Caco-2 (cell line): ENCODE measurements at regions of chr12 and their contacts with region 1.

Region 1: GRCh38 chr12:13044002-13044905 is at the start of gene FAM234B:
- DNase-seq: peak; percentile 82 to 89
- H3K4me3 ChIP-seq: peak within 1 kb of the TSS; percentile 96
- H3K4me3 Mint-ChIP-seq: peak within 1 kb of the TSS; percentile 77
- H3K27ac Mint-ChIP-seq: no peak within 1 kb of the TSS
- H3K4me1 ChIP-seq: peaks cover 13% of the 10 kb centered on the region
- H3K4me1 Mint-ChIP-seq: peaks cover 4% of the 10 kb centered on the region
- H3K27me3 ChIP-seq: no peaks in the 10 kb centered on the region
- H3K27me3 Mint-ChIP-seq: no peaks in the 10 kb centered on the region
- CTCF ChIP-seq: peak; percentile 55 to 62
- total RNA-seq, gene FAM234B: 11.2 and 11.4 TPM in 2 replicates

Region 2: DNA sequence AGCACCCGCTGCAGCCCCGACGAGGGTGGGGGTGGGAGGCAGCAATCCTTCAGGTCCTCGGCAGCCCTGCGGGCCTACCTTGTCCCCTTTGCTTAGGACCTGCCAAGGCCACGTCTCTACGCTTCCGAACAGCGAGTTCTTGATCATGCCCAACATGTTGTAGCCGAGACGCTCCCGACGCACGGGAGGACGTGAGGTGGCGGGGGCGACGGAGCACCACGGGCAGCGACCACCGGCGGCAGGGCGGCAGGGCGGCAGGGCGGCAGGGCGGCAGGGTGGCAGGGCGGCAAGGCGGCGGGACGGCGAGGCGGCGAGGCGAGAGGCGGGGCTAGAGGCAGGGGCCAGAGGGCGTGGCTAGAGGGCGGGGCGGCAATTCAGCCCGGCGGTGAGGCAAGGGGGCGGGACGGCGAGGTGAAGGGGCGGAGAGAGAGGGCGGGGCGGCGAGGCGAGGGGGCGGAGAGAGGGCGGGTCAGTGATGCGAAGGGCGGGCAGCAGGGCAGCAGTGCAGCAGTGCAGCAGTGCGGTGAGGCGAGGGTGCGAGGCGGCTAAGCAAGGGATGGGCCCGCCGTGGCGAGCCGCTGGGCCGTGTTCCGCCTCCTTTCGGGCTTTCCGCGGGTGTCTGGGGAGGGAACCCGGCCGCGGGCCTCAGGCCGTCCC is 44.2 kb before region 1 on chr12 and contains the start of gene HEBP1:
- CTCF ChIA-PET with region 1: no interaction called
- POLR2A ChIA-PET with region 1: no interaction called
- intact Hi-C with region 1: loop called (anchors 2 kb)
- DNase-seq: peak; percentile 97 to 99
- H3K4me3 ChIP-seq: peak within 1 kb of the TSS; percentile 85
- H3K4me3 Mint-ChIP-seq: peak within 1 kb of the TSS; percentile 88
- H3K27ac Mint-ChIP-seq: peak within 1 kb of the TSS; percentile 94
- H3K4me1 ChIP-seq: peaks cover 25% of the 10 kb centered on the region
- H3K4me1 Mint-ChIP-seq: peaks cover 25% of the 10 kb centered on the region
- H3K27me3 ChIP-seq: no peaks in the 10 kb centered on the region
- H3K27me3 Mint-ChIP-seq: no peaks in the 10 kb centered on the region
- CTCF ChIP-seq: no peak
- total RNA-seq, gene HEBP1: 55.2 and 55.8 TPM in 2 replicates

Region 3: GRCh38 chr12:13114251-13115052 is 70.2 kb after region 1 on chr12:
- CTCF ChIA-PET with region 1: no interaction called
- POLR2A ChIA-PET with region 1: no interaction called
- intact Hi-C with region 1: no loop called
- DNase-seq: no peak
- H3K4me3 ChIP-seq: no peak overlapping the region
- H3K4me3 Mint-ChIP-seq: no peak overlapping the region
- H3K27ac Mint-ChIP-seq: no peak overlapping the region
- H3K4me1 ChIP-seq: no peaks in the 10 kb centered on the region; the same call in 1 of the 2 replicates
- H3K4me1 Mint-ChIP-seq: peaks cover 13% of the 10 kb centered on the region
- H3K27me3 ChIP-seq: no peaks in the 10 kb centered on the region
- H3K27me3 Mint-ChIP-seq: no peaks in the 10 kb centered on the region
- CTCF ChIP-seq: no peak